Mammary epithelial cell (primary cell): ENCODE measurements at regions of chr19 and their contacts with region 1.

Region 1: GRCh38 chr19:42634409-42635232 is 39.9 kb upstream of the CEACAM8 start:
- DNase-seq: peak; percentile 34
- H3K4me3 ChIP-seq: no peak overlapping the region
- H3K27ac ChIP-seq: no peak overlapping the region
- H3K4me1 ChIP-seq: no peaks in the 10 kb centered on the region
- H3K27me3 ChIP-seq: peaks cover 2% of the 10 kb centered on the region
- CTCF ChIP-seq: peak; percentile 88 to 89

Region 2: DNA sequence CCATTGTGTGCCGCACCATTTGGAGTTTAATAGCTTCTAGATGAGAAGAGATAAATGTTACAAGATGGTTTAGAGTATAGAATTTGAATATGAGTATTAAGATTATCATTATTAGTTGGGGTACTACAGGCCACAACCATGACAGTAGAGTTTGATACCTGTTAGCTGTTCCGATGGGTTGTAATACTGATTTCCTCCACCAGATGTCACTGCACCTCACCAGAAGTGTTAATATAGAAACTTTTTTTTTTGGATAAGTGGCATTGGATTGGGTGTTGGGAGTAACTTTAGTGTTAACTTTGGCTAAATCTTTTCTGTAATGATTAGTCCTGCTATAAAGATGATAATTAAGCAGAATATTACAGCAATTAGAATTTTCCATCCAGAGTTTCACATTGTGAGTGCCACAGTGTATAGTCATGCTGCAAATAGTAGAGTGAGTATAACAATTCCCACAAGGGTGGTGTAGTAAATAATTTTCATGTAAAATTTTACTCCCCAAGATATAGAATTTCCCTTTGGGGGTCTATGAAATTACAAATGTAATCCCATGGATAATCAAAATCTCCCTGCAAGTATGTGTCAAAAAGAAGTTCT is 49.4 kb after region 1 on chr19:
- CTCF ChIA-PET with region 1: no interaction called
- dilution Hi-C with region 1: no loop called
- in situ Hi-C with region 1: no loop called
- intact Hi-C with region 1: loop called (anchors 5 kb)
- DNase-seq: peak; percentile 11
- H3K4me3 ChIP-seq: no peak overlapping the region
- H3K27ac ChIP-seq: no peak overlapping the region
- H3K4me1 ChIP-seq: no peaks in the 10 kb centered on the region
- H3K27me3 ChIP-seq: peaks cover 3% of the 10 kb centered on the region
- CTCF ChIP-seq: peak; percentile 69 to 73